Transverse colon (tissue), 4 donors: ENCODE measurements at regions of chr15 and their contacts with region 1.

Region 1: GRCh38 chr15:98799461-98800390 is 151.4 kb downstream of the IGF1R start:
- DNase-seq: no peak
- H3K4me3 ChIP-seq: no peak overlapping the region
- H3K27ac ChIP-seq: peak overlapping the region; percentile 69 to 78 (median 78)
- H3K4me1 ChIP-seq: peaks cover 11 to 49% (median 36%) of the 10 kb centered on the region in 4 donors
- H3K27me3 ChIP-seq: no peaks in the 10 kb centered on the region
- CTCF ChIP-seq: no peak
- EP300 ChIP-seq: no peak
- POLR2A ChIP-seq: no peak

Region 2: GRCh38 chr15:99068186-99068585 is 268.5 kb after region 1 on chr15:
- in situ Hi-C with region 1: loop called in 2 of 4 experiments (anchors 25 kb)
- intact Hi-C with region 1: loop called (anchors 10 kb)
- DNase-seq: no peak
- H3K4me3 ChIP-seq: no peak overlapping the region
- H3K27ac ChIP-seq: no peak overlapping the region
- H3K4me1 ChIP-seq: no peaks in the 10 kb centered on the region
- H3K27me3 ChIP-seq: peaks cover 3% of the 10 kb centered on the region
- CTCF ChIP-seq: no peak
- EP300 ChIP-seq: no peak
- POLR2A ChIP-seq: no peak